Activated naive CD4-positive, alpha-beta T cell treated with anti-CD3 and anti-CD28 coated beads for 36 hours (primary cell): ENCODE measurements at regions of chr12 and their contacts with region 1.

Region 1: DNA sequence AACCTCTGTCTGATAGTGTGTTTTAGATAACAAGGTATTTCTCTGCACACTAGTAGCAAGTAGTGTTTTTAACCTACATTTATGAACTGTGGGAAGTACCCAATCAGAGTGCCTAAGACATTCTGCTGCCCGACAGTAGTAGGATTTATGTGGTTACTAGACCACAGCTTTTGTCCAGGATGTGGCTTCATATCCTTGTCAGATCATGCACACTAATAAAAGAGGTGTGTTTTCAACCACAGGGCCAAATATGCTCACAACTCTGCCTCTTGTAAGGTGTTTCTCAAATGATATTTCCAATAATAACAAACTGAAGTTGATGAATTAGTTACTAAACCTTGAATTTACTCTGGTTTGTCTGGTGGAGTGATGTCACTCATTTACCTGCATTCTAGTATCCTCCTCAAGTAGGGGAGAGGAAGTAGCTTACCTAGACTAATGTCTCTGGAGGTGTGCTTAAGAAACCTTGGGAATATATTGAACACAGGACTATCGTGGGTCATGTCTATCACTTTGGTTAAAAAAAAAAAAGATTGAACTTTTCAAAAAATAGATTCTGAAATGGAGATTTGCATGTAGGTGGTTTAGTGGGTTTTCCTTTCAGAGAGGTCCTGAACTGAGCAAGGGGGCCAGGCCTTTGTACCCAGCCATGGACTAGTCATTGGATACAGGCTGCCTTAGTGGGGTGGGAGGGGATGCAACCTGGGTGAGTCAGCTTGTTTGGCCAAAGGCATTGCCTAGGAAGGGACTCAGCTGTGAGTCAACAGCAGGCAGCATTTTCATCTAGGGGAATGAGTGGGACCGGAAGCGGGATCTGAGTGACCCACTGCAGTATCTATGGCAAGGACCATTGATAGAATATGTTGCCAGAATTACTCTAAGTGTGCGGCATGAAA is 14.1 kb downstream of the FBXW8 start:
- DNase-seq: peak; percentile 70
- H3K4me3 Mint-ChIP-seq: no peak overlapping the region
- H3K27ac Mint-ChIP-seq: no peak overlapping the region
- H3K4me1 Mint-ChIP-seq: peaks cover 66% of the 10 kb centered on the region
- H3K27me3 Mint-ChIP-seq: peaks cover 3% of the 10 kb centered on the region

Region 2: DNA sequence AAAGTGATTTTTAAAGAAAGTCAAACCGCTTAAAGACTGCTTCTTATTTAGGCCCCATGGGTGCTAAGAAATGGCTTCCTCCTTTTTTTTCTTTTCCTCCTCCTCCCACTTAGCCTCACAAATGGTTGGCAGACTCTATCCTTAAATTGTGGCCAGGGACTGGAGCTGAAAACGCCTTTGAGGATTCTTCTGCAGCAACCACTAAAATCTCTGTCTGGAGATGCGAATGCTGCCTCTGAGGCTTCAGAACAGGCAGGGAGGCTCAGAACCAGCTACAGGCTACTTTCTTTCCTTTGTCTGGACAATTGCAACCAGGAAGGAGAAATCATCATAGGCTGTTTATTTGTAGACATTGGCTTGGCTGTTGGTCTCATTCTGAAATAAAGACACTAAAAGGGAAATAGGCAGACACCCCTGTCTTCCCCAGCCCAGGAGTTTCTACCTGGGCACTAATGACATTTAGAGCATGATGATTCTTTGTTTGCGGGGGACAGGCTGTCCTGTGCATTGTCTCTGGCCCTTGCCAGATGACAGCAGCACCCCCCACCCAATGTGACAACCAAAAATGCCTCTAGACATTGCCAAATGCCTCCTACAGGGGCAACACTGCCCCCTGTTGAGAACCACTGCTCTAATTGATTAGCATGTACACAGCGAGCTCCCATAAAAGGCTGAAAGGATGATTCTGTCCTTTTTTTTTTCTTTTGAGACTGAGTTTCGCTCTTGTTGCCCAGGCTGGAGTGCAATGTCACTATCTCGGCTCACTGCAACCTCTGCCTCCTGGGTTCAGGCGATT is 315.3 kb before region 1 on chr12:
- CTCF ChIA-PET with region 1: no interaction called
- intact Hi-C with region 1: no loop called
- DNase-seq: peak; percentile 61
- H3K4me3 Mint-ChIP-seq: no peak overlapping the region
- H3K27ac Mint-ChIP-seq: no peak overlapping the region
- H3K4me1 Mint-ChIP-seq: no peaks in the 10 kb centered on the region
- H3K27me3 Mint-ChIP-seq: no peaks in the 10 kb centered on the region

Region 3: GRCh38 chr12:116818948-116819832 is 105.6 kb before region 1 on chr12:
- CTCF ChIA-PET with region 1: no interaction called
- intact Hi-C with region 1: loop called (anchors 2 kb)
- DNase-seq: peak; percentile 87
- H3K4me3 Mint-ChIP-seq: peak overlapping the region; percentile 95
- H3K27ac Mint-ChIP-seq: peak overlapping the region; percentile 91
- H3K4me1 Mint-ChIP-seq: peaks cover 11% of the 10 kb centered on the region
- H3K27me3 Mint-ChIP-seq: no peaks in the 10 kb centered on the region

Region 4: GRCh38 chr12:116910645-116911451 is 14.0 kb before region 1 on chr12 and contains the start of gene FBXW8:
- CTCF ChIA-PET with region 1: interaction called, 4 read pairs
- intact Hi-C with region 1: loop called (anchors 1 kb)
- DNase-seq: peak; percentile 62
- H3K4me3 Mint-ChIP-seq: peak within 1 kb of the TSS; percentile 92
- H3K27ac Mint-ChIP-seq: no peak within 1 kb of the TSS
- H3K4me1 Mint-ChIP-seq: peaks cover 19% of the 10 kb centered on the region
- H3K27me3 Mint-ChIP-seq: peaks cover 4% of the 10 kb centered on the region
- total RNA-seq, gene FBXW8: 6.4 to 6.5 TPM

Region 5: DNA sequence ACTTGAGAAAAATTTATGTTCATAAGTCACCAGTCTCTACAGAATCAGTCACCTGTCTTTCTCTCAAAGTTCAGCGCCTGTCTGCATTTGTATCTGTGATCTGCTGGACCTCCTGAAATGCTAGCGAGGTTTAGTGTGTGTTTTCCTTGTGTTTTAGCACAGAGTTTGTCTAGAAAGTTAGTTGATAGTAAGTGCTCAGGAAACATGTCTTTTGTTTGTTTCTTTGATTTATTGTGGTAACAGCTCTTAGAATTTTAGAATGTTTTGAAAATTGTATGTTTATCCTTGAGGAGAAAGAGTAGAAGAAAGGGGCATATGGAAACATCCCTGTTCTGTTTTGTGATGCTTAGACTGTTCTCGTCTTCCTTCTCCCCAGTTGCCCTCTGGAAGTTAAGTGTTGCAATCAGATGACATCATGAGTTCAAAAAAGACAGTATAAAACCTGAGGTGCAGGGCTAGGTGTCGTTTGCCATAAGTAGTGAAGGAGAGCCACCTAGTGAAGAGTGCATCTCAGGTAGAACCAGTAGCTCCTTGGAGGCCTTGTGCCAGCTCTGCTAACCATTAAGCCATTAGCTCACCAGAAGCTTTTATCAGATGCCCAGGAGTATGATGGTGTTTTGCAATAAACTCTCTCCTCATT is 30.7 kb after region 1 on chr12:
- CTCF ChIA-PET with region 1: interaction called, 3 read pairs
- intact Hi-C with region 1: loop called (anchors 1 kb)
- DNase-seq: peak; percentile 14
- H3K4me3 Mint-ChIP-seq: no peak overlapping the region
- H3K27ac Mint-ChIP-seq: no peak overlapping the region
- H3K4me1 Mint-ChIP-seq: peaks cover 14% of the 10 kb centered on the region
- H3K27me3 Mint-ChIP-seq: no peaks in the 10 kb centered on the region